Heart left ventricle (tissue), 16 donors: ENCODE measurements at regions of chr5 and their contacts with region 1.

Region 1: GRCh38 chr5:95646554-95647431 is at the start of gene RFESD:
- DNase-seq: peak; percentile 96 to 100 (median 99)
- ATAC-seq: peak; percentile 99 to 100 (median 99)
- H3K4me3 ChIP-seq: peak within 1 kb of the TSS; percentile 28 to 76 (median 64)
- H3K27ac ChIP-seq: peak within 1 kb of the TSS; percentile 89 to 99 (median 95)
- H3K4me1 ChIP-seq: peaks cover 0 to 25% (median 9%) of the 10 kb centered on the region in 12 donors
- H3K27me3 ChIP-seq: no peaks in the 10 kb centered on the region
- CTCF ChIP-seq: peak in 5 of 12 donors; percentile 2 to 31 (median 11)
- POLR2A ChIP-seq: peak; percentile 88 to 94
- total RNA-seq, gene RFESD: 1.3 to 4.6 (median 3.5) TPM

Region 2: GRCh38 chr5:95508550-95508949 is 138.2 kb before region 1 on chr5:
- intact Hi-C with region 1: no loop called
- DNase-seq: no peak
- ATAC-seq: no peak
- H3K4me3 ChIP-seq: no peak overlapping the region
- H3K27ac ChIP-seq: no peak overlapping the region
- H3K4me1 ChIP-seq: no peaks in the 10 kb centered on the region
- H3K27me3 ChIP-seq: no peaks in the 10 kb centered on the region
- CTCF ChIP-seq: no peak
- POLR2A ChIP-seq: no peak

Region 3: DNA sequence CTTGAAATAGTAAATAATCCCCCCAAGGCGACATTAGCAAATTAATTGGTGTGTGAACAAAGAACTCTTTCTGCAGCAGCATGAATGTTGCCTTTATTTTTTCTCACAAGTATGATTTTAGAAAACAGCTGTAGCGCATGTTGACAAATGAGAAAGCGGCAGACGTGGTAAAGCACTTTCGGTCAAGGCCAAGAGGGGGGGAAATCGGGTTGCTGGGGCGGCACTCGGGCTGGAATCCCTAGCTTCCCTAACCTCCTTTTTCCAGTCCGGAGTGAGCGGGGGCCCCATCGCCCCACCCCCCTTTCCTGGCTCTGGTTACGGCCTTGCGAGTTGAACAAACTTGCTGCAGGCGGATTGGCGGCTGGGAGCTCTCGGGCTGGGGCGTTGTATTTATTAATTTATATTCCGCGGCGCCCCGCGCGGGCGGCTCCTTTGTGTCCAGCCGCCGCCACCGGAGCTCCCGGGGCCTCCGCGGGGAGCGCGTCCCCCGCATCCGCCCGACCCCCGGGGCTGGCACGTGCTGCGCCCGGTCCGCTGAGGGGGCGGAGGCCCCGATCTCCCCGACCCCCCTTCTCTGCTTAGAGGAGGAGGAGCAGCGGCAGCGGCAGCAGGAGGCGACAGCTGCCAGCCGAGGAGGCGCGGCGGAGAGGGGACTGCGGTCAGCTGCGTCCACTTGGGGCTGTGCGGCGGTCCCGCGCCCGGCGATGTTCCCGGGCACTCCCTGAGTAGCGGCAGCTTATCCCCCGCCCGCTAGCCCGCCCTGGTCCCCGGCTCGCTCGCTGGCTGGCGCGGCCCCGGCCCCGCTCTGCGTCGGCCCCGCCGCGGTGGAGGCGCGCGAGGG is 84.2 kb after region 1 on chr5 and contains the start of gene RHOBTB3:
- intact Hi-C with region 1: loop called in 6 of 10 experiments (anchors 1 to 5 kb)
- DNase-seq: peak; percentile 90 to 95 (median 92)
- ATAC-seq: peak; percentile 50 to 88 (median 79)
- H3K4me3 ChIP-seq: peak within 1 kb of the TSS; percentile 62 to 96 (median 76)
- H3K27ac ChIP-seq: peak within 1 kb of the TSS; percentile 84 to 98 (median 94)
- H3K4me1 ChIP-seq: peaks cover 0 to 71% (median 40%) of the 10 kb centered on the region in 12 donors
- H3K27me3 ChIP-seq: no peaks in the 10 kb centered on the region
- CTCF ChIP-seq: peak in 3 of 12 donors; percentile 17 to 22 (median 20)
- POLR2A ChIP-seq: peak in 1 of 2 donors; percentile 74
- total RNA-seq, gene RHOBTB3: 62.9 to 116 (median 86.7) TPM

Region 4: GRCh38 chr5:95781101-95781583 is 134.3 kb after region 1 on chr5:
- intact Hi-C with region 1: loop called in 8 of 10 experiments (anchors 2 to 10 kb)
- DNase-seq: peak; percentile 80 to 88 (median 82)
- ATAC-seq: peak; percentile 78 to 93 (median 92)
- H3K4me3 ChIP-seq: no peak overlapping the region
- H3K27ac ChIP-seq: peak overlapping the region; percentile 11 to 77 (median 30)
- H3K4me1 ChIP-seq: peaks cover 0 to 52% (median 20%) of the 10 kb centered on the region in 12 donors
- H3K27me3 ChIP-seq: no peaks in the 10 kb centered on the region
- CTCF ChIP-seq: peak; percentile 73 to 97 (median 88)
- POLR2A ChIP-seq: no peak

Region 5: DNA sequence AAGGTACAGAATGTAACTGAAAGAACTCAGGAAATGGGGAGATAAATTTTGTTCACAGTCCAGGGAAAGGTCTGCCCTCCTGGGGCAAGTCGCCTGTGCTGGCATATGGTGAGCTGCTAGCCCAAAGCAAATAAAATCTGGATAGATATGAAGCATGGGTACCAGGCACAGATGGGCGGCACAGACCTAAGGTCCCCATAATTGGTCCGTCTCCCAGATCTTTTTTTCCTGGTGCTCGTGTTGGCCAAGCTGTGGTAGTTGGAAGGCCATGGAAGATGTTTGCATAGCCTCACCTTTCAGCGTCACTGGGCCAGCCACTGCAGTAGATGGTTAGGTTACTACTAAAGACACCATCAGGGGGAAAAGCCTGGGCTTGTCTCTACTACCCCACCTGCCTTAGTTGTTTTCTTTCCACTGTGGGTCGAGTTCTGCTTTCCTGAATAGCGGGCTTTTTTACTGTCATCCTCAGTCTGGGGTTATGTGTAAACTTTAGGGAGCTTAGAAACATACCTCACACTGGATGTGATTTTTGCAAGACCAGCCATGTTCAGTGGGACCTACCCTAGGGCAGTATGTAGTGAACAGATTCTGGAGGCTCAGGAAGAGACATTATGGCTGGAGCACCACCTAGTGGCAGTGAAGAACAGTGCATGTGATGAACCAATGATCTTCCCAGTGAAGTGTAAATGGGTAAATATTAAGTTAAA is 199.9 kb after region 1 on chr5:
- intact Hi-C with region 1: loop called (anchors 1 to 5 kb)
- DNase-seq: peak in 4 of 5 donors; percentile 59 to 70 (median 66)
- ATAC-seq: peak; percentile 26 to 80 (median 74)
- H3K4me3 ChIP-seq: no peak overlapping the region
- H3K27ac ChIP-seq: no peak overlapping the region
- H3K4me1 ChIP-seq: peaks cover 0 to 30% (median 9%) of the 10 kb centered on the region in 12 donors
- H3K27me3 ChIP-seq: no peaks in the 10 kb centered on the region
- CTCF ChIP-seq: peak; percentile 88 to 98 (median 96)
- POLR2A ChIP-seq: no peak

Region 6: GRCh38 chr5:96601811-96602244 is 955.0 kb after region 1 on chr5:
- intact Hi-C with region 1: loop called in 2 of 10 experiments (anchors 5 to 10 kb)
- DNase-seq: peak in 2 of 5 donors; percentile 37 to 48
- ATAC-seq: peak; percentile 68 to 92 (median 85)
- H3K4me3 ChIP-seq: peak overlapping the region in 3 of 12 donors; percentile 15 to 27 (median 27)
- H3K27ac ChIP-seq: no peak overlapping the region
- H3K4me1 ChIP-seq: peaks cover 0 to 9% (median 0%) of the 10 kb centered on the region in 12 donors
- H3K27me3 ChIP-seq: no peaks in the 10 kb centered on the region
- CTCF ChIP-seq: peak; percentile 76 to 90 (median 82)
- POLR2A ChIP-seq: no peak